Right cardiac atrium (tissue), 5 donors: ENCODE measurements at regions of chr2 and their contacts with region 1.

Region 1: DNA sequence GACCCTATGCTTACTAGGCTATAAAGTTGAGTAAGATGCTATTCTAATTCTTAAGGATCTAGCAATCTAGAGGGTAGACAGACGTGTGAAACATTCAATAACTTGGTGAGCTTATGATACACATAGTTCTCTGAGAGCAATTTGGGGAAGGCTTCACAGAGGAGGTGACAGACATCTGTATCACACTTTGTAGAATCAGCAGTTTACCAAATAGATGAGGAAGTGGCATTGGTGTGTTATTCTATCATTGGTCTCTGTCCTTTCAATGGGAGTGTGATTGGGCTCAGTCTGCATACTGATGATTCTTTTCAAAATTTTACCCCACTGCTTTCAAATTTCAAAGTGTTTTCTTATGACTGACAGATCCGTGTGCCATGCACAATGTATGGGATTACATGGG is 47.0 kb upstream of the TMEM178A start:
- DNase-seq: no peak
- ATAC-seq: no peak
- H3K4me3 ChIP-seq: no peak overlapping the region
- H3K27ac ChIP-seq: no peak overlapping the region
- H3K4me1 ChIP-seq: peaks cover 2% of the 10 kb centered on the region
- H3K27me3 ChIP-seq: no peaks in the 10 kb centered on the region

Region 2: DNA sequence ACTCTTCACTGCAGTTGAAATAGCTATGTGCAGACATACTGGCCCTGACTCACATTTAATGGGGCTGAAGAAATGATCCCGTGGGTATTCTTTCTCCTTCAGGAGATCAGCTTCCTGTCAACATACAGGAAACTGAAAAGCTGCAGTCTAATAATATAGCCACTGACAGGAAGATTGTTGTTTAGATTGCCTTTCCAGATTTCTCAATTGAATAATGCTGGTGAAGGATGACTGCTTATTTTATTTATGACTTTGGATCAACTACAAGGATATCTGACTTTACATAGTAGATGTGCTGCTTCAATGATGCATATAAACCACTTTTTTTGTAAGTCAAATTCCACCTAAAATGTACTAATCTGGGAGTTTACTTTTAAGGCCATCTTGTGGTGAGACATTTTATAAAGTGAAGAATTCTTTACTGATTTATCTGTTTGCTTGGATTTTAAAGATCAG is 88.3 kb before region 1 on chr2:
- intact Hi-C with region 1: no loop called
- DNase-seq: no peak
- ATAC-seq: no peak
- H3K4me3 ChIP-seq: no peak overlapping the region
- H3K27ac ChIP-seq: no peak overlapping the region
- H3K4me1 ChIP-seq: peaks cover 4% of the 10 kb centered on the region
- H3K27me3 ChIP-seq: no peaks in the 10 kb centered on the region

Region 3: GRCh38 chr2:39679805-39680204 is 61.1 kb after region 1 on chr2:
- intact Hi-C with region 1: loop called in 1 of 4 experiments (anchors 10 kb)
- DNase-seq: no peak
- ATAC-seq: peak in 1 of 2 donors; percentile 59
- H3K4me3 ChIP-seq: no peak overlapping the region
- H3K27ac ChIP-seq: peak overlapping the region; percentile 72
- H3K4me1 ChIP-seq: no peaks in the 10 kb centered on the region
- H3K27me3 ChIP-seq: no peaks in the 10 kb centered on the region